ENCODE measurements at regions of chr3 and their contacts with region 1.

Region 1: DNA sequence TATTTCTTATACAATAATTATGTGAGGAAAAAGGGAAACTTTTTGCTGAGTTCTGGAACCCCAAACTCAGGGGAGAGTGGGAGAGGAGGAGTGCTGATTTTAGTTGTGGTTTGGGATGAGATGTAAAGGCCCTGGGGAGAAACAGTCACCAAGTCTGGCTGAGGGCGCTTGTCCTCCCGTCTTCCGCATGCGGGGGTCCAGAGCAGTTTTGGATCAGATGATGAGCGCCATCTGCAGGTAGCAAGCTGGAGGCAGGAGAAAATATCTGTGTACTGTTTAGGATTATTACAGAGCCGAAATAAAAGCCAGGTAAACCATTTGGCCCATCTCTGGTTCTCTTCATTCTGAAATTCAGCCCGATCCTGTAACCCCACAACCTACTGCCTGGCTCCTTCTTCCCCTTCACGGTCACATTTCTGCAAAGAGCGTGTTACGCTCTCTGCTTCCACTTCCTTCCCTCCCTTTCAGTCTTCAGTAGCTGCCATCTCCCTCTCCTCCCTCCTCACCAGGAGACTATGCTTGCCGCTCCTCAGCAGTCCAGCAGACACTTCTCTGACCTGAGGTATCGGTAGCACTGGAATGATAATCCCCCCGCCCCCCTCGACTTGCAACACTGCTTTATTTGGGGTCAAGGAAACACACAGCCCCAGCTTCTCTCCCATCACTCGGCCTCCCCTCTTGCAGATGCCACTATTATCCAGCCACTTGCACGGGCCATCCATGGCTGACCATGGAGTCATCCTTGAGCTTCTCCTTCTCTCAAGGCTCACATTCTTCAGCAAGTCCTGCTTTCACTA is 1.4 kb upstream of the PARP14 start:
- DNase-seq: peak; percentile 91
- H3K4me3 Mint-ChIP-seq: peak overlapping the region; percentile 83
- H3K27ac Mint-ChIP-seq: peak overlapping the region; percentile 96
- H3K4me1 Mint-ChIP-seq: peaks cover 47% of the 10 kb centered on the region
- H3K27me3 Mint-ChIP-seq: no peaks in the 10 kb centered on the region

Region 2: DNA sequence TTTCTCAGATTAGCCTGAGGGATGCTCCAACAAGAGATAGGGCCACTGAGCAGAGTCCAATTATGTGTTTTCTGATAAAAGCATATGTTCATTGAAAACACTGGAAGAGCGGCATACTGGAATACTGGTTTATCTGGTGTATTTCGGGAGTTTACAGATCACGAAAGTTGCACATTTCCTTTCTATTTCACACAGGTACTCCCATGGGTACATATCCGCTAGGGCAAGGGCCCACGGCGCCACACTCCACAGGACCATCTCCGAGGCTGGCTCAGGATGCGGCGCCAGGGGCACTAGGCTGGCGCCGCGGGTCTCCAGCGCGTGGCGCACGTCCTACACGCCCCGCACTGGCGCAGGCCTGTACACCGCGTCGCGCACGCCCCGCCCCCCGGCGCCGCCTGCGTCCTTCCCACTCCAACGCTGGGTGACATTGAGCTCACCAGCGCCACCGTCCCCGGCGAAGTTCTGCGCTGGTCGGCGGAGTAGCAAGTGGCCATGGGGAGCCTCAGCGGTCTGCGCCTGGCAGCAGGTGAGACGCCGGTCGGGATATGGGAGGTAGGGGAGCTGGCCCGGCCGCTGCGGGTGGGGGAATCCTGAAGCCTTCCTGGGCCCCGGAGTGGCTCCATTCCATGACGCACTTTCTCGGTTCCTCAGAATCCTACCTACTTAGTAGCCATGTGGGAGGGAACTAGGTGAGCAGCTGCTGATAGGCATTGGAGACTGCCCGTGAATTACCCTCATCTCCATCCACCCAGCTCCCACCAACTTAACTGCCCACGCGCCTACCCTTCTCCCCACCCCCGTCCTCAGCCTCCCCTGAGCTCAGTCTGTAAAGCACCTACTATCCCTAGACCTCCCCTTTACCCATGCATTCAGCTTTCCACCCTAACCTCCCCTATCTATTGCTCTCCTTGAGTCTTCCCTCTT is 295.2 kb before region 1 on chr3 and contains the start of gene FAM162A:
- CTCF ChIA-PET with region 1: interaction called, 6 read pairs
- intact Hi-C with region 1: loop called (anchors 1 kb)
- DNase-seq: peak; percentile 93
- H3K4me3 Mint-ChIP-seq: peak within 1 kb of the TSS; percentile 90
- H3K27ac Mint-ChIP-seq: peak within 1 kb of the TSS; percentile 93
- H3K4me1 Mint-ChIP-seq: peaks cover 62% of the 10 kb centered on the region
- H3K27me3 Mint-ChIP-seq: no peaks in the 10 kb centered on the region
- total RNA-seq, gene FAM162A: 111 to 112 TPM

Region 3: DNA sequence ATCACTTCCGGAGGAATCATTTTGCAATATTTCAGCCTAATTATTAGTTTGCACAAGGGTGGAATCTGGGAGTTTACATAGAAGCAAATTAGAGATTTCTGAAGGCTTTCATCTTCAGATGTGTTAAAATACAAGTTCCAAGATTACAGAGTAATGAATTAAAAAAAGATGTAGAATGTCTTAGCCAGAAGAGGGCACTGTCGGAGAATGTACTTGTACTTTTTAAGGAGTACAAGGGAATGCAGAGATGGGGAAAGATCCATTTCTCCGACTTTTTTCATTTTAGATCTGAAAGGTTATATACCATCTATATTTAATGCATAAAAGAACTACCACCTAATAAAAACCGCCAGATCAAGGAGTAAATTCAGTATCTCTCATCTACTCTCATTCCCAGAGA is 220.3 kb before region 1 on chr3:
- CTCF ChIA-PET with region 1: interaction called, 20 read pairs
- intact Hi-C with region 1: loop called (anchors 1 kb)
- DNase-seq: no peak
- H3K4me3 Mint-ChIP-seq: no peak overlapping the region
- H3K27ac Mint-ChIP-seq: no peak overlapping the region
- H3K4me1 Mint-ChIP-seq: peaks cover 8% of the 10 kb centered on the region
- H3K27me3 Mint-ChIP-seq: no peaks in the 10 kb centered on the region

Region 4: GRCh38 chr3:122572940-122573412 is 106.3 kb before region 1 on chr3:
- CTCF ChIA-PET with region 1: interaction called, 12 read pairs
- intact Hi-C with region 1: loop called (anchors 1 kb)
- DNase-seq: peak; percentile 75
- H3K4me3 Mint-ChIP-seq: no peak overlapping the region
- H3K27ac Mint-ChIP-seq: peak overlapping the region; percentile 73
- H3K4me1 Mint-ChIP-seq: peaks cover 69% of the 10 kb centered on the region
- H3K27me3 Mint-ChIP-seq: no peaks in the 10 kb centered on the region

Region 5: DNA sequence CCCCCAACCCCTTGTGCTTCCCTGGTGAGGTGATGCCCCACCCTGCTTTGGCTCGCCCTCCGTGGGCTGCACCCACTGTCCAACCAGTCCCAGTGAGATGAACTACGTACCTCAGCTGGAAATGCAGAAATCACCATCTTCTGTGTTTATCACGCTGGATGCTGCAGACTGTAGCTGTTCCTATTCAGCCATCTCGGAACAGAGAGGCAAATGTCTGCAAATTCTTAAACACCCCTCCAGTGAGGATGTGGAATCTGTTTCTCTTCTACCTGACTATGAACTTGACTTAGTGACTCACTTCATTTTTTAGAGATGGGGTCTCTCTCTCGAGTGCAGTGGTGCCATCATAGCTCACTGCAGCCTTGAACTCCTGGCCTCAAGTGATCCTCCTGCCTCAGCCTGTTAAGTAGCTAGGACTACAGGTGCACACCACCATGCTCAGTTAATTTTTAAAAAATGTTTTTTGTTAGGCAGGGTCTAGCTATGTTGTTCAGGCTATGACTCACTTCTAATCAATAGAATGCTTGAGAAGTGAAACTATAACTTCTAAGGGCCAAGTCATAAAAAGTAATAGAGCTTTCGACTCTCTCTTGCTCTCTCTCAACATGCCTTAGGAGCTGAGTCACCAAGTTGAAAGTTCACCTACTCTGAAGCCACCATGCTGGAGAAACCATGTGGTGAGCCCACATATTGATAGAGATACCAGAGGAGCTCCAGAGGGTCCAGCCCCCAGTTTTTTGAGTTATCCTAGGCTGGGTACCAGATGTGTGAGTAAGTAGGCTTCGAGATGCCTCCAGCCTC is 10.2 kb before region 1 on chr3:
- CTCF ChIA-PET with region 1: interaction called, 17 read pairs
- intact Hi-C with region 1: no loop called
- DNase-seq: peak; percentile 56
- H3K4me3 Mint-ChIP-seq: no peak overlapping the region
- H3K27ac Mint-ChIP-seq: no peak overlapping the region
- H3K4me1 Mint-ChIP-seq: peaks cover 15% of the 10 kb centered on the region
- H3K27me3 Mint-ChIP-seq: peaks cover 3% of the 10 kb centered on the region

Region 6: DNA sequence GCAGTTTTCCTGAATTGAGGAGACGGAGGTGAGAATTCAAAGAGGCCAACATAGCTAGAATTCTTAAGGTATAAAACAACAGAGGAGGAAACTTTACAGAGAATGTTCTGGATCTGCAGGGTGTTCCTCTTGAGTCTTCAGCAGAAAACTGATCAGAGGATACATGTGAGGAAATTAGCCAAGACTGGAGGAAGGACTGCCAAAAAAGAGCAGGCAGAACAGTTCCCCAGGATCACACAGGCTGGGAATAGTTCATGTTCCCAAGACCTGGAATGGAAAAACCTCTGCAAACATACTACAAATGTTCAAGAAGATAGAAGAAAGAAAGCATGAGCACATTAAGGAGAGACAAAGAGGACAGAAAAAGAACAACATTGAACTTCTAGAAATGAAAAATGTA is 123.0 kb after region 1 on chr3:
- CTCF ChIA-PET with region 1: no interaction called
- intact Hi-C with region 1: no loop called
- DNase-seq: no peak
- H3K4me3 Mint-ChIP-seq: no peak overlapping the region
- H3K27ac Mint-ChIP-seq: no peak overlapping the region
- H3K4me1 Mint-ChIP-seq: peaks cover 11% of the 10 kb centered on the region
- H3K27me3 Mint-ChIP-seq: no peaks in the 10 kb centered on the region

Region 7: GRCh38 chr3:122936335-122936734 is 257.1 kb after region 1 on chr3:
- CTCF ChIA-PET with region 1: no interaction called
- intact Hi-C with region 1: no loop called
- DNase-seq: no peak
- H3K4me3 Mint-ChIP-seq: no peak overlapping the region
- H3K27ac Mint-ChIP-seq: no peak overlapping the region
- H3K4me1 Mint-ChIP-seq: no peaks in the 10 kb centered on the region
- H3K27me3 Mint-ChIP-seq: peaks cover 2% of the 10 kb centered on the region

Measured in activated naive CD4-positive, alpha-beta T cell treated with anti-CD3 and anti-CD28 coated beads for 36 hours (primary cell).